CD4-positive, alpha-beta memory T cell (primary cell): ENCODE measurements at regions of chr2 and their contacts with region 1.

Region 1: DNA sequence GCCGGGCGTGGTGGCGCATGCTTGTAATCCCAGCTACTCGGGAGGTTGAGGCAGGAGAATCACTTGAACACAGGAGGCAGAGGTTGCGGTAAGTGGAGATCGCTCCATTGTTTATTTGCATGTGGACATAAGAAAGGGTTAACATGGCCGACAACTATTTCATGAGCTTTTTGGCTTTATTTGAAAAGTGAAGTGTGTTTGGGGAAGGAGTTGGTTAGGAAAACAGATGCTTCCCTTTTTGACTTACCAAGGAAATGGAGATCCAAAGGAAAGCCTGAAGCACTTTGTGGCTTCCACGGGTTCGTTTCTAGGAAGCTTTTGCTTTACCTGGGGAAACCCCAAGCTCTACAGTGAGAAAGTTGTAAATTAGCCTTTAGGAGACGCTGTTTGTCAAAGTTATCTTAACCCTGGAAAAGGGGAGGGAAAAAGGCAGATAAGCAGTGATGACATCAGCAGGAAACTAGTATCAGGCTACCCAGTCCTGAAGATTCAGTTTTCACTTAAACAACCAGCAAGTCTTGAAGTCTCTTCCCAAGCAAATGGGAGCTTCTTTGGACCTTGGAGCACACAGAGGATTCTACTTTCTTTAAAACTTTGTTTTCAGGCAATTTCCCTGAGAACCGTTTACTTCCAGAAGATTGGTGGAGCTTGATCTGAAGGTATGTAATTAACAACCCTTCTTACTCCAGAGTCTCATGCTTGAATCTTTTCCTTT is at the start of gene CASP10:
- DNase-seq: peak; percentile 62 to 81 (median 76)
- H3K4me3 ChIP-seq: peak within 1 kb of the TSS; percentile 54 to 87
- H3K4me3 Mint-ChIP-seq: peak within 1 kb of the TSS; percentile 90 to 99 (median 96)
- H3K27ac ChIP-seq: peak within 1 kb of the TSS; percentile 75
- H3K27ac Mint-ChIP-seq: peak within 1 kb of the TSS; percentile 92 to 98 (median 96)
- H3K4me1 ChIP-seq: peaks cover 37% of the 10 kb centered on the region
- H3K4me1 Mint-ChIP-seq: peaks cover 28 to 54% (median 40%) of the 10 kb centered on the region in 4 donors
- H3K27me3 ChIP-seq: no peaks in the 10 kb centered on the region
- H3K27me3 Mint-ChIP-seq: no peaks in the 10 kb centered on the region
- total RNA-seq, gene CASP10: 30.6 to 36.6 TPM

Region 2: DNA sequence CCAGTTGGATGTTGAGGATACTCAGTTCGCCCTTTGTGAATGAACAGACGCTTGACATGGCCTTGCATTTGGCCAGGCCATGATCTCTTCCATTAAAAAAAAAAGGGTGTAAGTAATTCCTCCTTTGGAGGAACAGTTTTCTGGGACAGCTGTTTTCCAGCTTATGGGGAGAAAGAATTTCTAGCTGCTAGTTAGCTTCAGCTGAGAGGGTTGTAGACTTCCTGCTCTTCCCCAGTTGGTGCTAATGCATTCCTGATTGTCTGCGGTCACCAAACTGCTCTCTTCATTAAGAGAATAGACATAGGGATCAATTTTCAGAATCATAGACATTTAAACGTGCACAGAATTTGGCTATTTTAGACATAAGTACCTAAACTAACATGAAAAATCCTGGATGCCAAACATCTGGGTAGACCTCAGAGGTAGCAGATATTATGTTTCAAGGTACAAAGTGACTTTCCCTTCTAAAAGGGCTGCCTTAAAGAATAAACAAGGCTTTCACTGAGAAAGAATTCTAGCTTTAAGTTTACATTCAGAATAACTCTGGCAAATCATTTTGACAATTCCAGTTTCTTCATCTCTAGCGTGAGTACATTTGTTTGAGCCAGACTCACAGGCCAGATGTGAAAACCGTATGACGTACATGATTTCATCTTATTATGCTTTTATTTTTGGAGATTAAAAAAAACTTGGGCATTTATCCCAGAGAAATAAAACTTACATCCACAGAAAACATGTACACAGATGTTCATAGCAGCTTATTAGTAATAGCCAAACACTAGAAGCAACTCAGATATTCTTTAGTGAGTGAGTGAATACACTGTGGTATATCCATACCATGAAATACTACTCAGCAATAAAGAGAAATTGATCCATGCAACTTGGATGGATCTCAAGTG is 1156.2 kb before region 1 on chr2:
- CTCF ChIA-PET with region 1: no interaction called
- POLR2A ChIA-PET with region 1: no interaction called
- intact Hi-C with region 1: no loop called
- DNase-seq: no peak
- H3K4me3 ChIP-seq: no peak overlapping the region
- H3K4me3 Mint-ChIP-seq: no peak overlapping the region
- H3K27ac ChIP-seq: no peak overlapping the region
- H3K27ac Mint-ChIP-seq: no peak overlapping the region
- H3K4me1 ChIP-seq: no peaks in the 10 kb centered on the region
- H3K4me1 Mint-ChIP-seq: no peaks in the 10 kb centered on the region
- H3K27me3 ChIP-seq: peaks cover 3% of the 10 kb centered on the region
- H3K27me3 Mint-ChIP-seq: peaks cover 6 to 14% of the 10 kb centered on the region in 2 donors

Region 3: DNA sequence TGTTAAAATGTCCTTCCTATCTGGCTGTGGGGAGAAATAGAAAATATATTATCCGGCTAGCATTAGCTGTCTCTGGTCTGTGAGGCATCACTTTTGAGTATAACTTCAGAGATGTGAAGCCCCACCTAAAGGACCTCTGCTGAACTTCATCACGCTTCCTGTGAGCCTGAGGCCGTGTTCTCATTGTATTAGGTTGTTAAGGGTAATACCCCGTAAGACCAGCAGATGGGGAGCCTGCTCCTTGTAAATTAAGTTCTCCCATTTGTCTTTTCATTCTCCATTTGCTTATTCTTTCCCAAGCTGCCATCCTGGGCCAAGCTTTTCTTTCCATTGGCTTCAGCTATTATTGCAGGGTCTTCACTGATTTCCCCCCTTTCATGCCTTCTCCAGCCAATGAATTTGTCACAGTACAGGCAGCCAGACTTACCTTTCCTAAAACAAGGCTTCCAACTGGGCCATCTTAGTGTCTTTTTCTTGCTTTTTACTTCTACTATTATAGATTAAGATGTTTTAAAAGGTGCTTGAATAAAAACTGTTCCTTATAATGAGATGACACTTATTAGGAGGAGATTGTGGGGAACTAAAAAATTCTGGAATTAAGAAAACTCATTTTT is 281.2 kb before region 1 on chr2:
- CTCF ChIA-PET with region 1: interaction called, 27 read pairs
- POLR2A ChIA-PET with region 1: interaction called, 8 read pairs
- intact Hi-C with region 1: no loop called
- DNase-seq: peak; percentile 76 to 83 (median 79)
- H3K4me3 ChIP-seq: no peak overlapping the region
- H3K4me3 Mint-ChIP-seq: no peak overlapping the region
- H3K27ac ChIP-seq: peak overlapping the region; percentile 1
- H3K27ac Mint-ChIP-seq: peak overlapping the region; percentile 10 to 81 (median 65)
- H3K4me1 ChIP-seq: no peaks in the 10 kb centered on the region
- H3K4me1 Mint-ChIP-seq: peaks cover 6 to 7% (median 6%) of the 10 kb centered on the region in 4 donors
- H3K27me3 ChIP-seq: no peaks in the 10 kb centered on the region
- H3K27me3 Mint-ChIP-seq: no peaks in the 10 kb centered on the region

Region 4: DNA sequence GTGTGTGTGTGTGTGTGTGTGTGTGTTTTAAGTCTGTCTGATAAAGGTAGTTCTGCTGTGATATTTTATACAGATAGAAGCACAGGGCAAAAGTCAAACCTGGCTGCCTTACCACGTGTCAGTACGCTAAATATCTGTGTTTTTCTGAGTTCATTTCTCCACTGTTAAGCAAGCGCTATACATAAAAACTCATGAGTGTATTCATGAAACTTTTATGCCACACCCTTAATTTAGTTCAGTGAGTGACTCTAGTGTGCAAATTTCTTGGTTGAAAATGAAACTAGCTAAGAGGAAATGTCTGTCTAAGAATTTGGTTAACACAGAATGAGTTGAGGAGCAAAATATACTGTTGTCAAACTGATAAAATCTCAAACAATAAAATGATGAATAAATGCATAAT is 11.3 kb after region 1 on chr2:
- CTCF ChIA-PET with region 1: interaction called, 27 read pairs
- POLR2A ChIA-PET with region 1: interaction called, 48 read pairs
- intact Hi-C with region 1: no loop called
- DNase-seq: peak in 3 of 5 donors; percentile 29 to 36 (median 32)
- H3K4me3 ChIP-seq: no peak overlapping the region
- H3K4me3 Mint-ChIP-seq: peak overlapping the region; percentile 54 to 93 (median 80)
- H3K27ac ChIP-seq: peak overlapping the region; percentile 41
- H3K27ac Mint-ChIP-seq: peak overlapping the region; percentile 62 to 95 (median 91)
- H3K4me1 ChIP-seq: peaks cover 77% of the 10 kb centered on the region
- H3K4me1 Mint-ChIP-seq: peaks cover 46 to 79% (median 62%) of the 10 kb centered on the region in 4 donors
- H3K27me3 ChIP-seq: no peaks in the 10 kb centered on the region
- H3K27me3 Mint-ChIP-seq: no peaks in the 10 kb centered on the region

Region 5: DNA sequence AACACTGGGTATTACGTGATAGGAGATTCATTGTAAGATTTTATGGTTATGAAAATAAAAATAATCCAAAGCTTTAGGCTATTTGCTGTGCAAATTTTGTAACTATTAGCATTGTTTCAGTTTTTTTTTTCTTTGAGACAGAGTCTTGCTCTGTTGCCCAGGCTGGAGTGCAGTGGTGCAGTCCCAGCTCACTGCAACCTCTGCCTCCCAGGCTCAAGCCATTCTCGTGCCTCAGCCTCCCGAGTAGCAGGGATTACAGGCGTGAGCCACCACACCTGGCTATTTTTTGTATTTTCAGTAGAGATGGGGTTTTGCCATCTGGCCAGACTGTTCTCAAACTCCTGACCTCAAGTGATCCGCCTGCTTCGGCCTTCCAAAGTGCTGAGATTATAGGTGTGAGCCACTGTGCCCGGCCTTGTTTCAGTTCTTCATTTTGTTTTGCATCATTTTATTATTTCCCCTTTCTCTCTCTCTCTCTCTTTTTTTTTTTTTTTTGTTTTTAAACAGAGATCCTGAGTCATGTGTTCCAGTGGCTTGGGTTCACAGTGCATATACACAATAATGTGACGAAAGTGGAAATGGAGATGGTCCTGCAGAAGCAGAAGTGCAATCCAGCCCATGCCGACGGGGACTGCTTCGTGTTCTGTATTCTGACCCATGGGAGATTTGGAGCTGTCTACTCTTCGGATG is 25.9 kb after region 1 on chr2:
- CTCF ChIA-PET with region 1: interaction called, 14 read pairs
- POLR2A ChIA-PET with region 1: interaction called, 11 read pairs
- intact Hi-C with region 1: loop called (anchors 1 kb)
- DNase-seq: no peak
- H3K4me3 ChIP-seq: no peak overlapping the region
- H3K4me3 Mint-ChIP-seq: no peak overlapping the region
- H3K27ac ChIP-seq: no peak overlapping the region
- H3K27ac Mint-ChIP-seq: peak overlapping the region in 2 of 7 donors; percentile 1 to 68
- H3K4me1 ChIP-seq: peaks cover 24% of the 10 kb centered on the region
- H3K4me1 Mint-ChIP-seq: peaks cover 22 to 31% (median 27%) of the 10 kb centered on the region in 4 donors
- H3K27me3 ChIP-seq: no peaks in the 10 kb centered on the region
- H3K27me3 Mint-ChIP-seq: no peaks in the 10 kb centered on the region

Region 6: DNA sequence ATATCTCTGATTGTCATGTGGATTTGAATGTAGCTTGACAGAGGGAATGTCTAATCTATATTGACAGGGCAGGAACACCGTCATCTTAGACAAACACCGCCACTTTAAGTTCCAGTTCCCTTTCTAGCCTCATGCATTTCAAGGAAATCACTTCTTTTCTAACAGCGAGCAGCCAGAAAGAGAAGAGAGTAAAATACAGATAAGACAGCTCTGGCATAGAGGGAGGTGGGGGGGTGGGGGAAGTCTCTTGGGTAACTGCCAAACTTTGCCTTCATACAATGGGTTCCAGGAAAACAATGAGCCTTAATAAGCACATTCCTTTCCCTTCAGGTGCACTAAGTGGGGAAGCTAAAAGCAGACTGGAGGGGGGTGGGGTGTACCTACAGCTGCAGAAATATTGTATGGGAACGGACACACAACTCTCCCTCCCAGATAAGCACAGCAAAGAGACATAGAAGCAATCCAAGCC is 37.3 kb after region 1 on chr2:
- CTCF ChIA-PET with region 1: interaction called, 16 read pairs
- POLR2A ChIA-PET with region 1: interaction called, 3 read pairs
- intact Hi-C with region 1: no loop called
- DNase-seq: no peak
- H3K4me3 ChIP-seq: no peak overlapping the region
- H3K4me3 Mint-ChIP-seq: peak overlapping the region in 2 of 8 donors; percentile 22 to 29
- H3K27ac ChIP-seq: no peak overlapping the region
- H3K27ac Mint-ChIP-seq: peak overlapping the region; percentile 68 to 90 (median 82)
- H3K4me1 ChIP-seq: peaks cover 24% of the 10 kb centered on the region
- H3K4me1 Mint-ChIP-seq: peaks cover 23 to 63% (median 39%) of the 10 kb centered on the region in 4 donors
- H3K27me3 ChIP-seq: no peaks in the 10 kb centered on the region
- H3K27me3 Mint-ChIP-seq: no peaks in the 10 kb centered on the region

Region 7: GRCh38 chr2:201363857-201364560 is 181.2 kb after region 1 on chr2:
- CTCF ChIA-PET with region 1: interaction called, 16 read pairs
- POLR2A ChIA-PET with region 1: interaction called, 3 read pairs
- intact Hi-C with region 1: loop called (anchors 1 kb)
- DNase-seq: peak in 4 of 5 donors; percentile 49 to 59 (median 58)
- H3K4me3 ChIP-seq: no peak overlapping the region
- H3K4me3 Mint-ChIP-seq: peak overlapping the region in 3 of 8 donors; percentile 24 to 51 (median 32)
- H3K27ac ChIP-seq: no peak overlapping the region
- H3K27ac Mint-ChIP-seq: peak overlapping the region in 4 of 7 donors; percentile 38 to 84 (median 70)
- H3K4me1 ChIP-seq: peaks cover 31% of the 10 kb centered on the region
- H3K4me1 Mint-ChIP-seq: peaks cover 20 to 33% (median 27%) of the 10 kb centered on the region in 4 donors
- H3K27me3 ChIP-seq: no peaks in the 10 kb centered on the region
- H3K27me3 Mint-ChIP-seq: no peaks in the 10 kb centered on the region

Region 8: GRCh38 chr2:201483342-201483741 is 300.5 kb after region 1 on chr2:
- CTCF ChIA-PET with region 1: no interaction called
- POLR2A ChIA-PET with region 1: no interaction called
- intact Hi-C with region 1: no loop called
- DNase-seq: no peak
- H3K4me3 ChIP-seq: no peak overlapping the region
- H3K4me3 Mint-ChIP-seq: no peak overlapping the region
- H3K27ac ChIP-seq: no peak overlapping the region
- H3K27ac Mint-ChIP-seq: no peak overlapping the region
- H3K4me1 ChIP-seq: no peaks in the 10 kb centered on the region
- H3K4me1 Mint-ChIP-seq: no peaks in the 10 kb centered on the region
- H3K27me3 ChIP-seq: no peaks in the 10 kb centered on the region
- H3K27me3 Mint-ChIP-seq: peaks cover 0 to 2% of the 10 kb centered on the region in 2 donors

Region 9: DNA sequence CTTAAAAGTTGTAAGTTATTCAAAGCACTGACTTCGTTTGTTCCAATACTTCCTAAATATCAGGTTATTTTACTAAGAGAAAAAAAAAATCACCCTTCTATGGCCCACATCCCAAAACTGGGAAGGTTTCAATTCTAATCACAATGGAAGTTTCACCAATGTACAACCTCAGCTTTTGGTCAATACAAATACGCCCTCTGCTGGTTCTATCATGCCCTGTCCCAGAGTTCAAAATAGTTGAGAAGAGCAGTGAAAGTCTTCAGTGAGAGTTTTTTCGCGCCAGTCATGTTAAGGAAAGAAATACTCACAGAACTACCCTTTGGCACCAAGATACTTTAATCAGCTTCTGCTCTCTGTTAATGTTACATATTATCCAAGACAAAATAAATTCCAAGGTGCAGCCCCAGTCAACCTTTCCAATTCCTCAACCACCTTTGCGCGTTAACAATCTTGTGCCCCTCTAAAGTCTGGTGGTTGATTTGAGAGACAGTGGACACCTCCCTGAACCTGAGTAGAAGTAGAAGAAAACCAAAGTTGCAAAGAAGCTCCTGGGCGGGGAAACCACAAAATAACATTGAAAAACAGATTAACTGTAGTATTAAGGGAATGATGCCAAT is 995.6 kb after region 1 on chr2:
- CTCF ChIA-PET with region 1: interaction called, 7 read pairs
- POLR2A ChIA-PET with region 1: no interaction called
- intact Hi-C with region 1: loop called (anchors 2 kb)
- DNase-seq: peak; percentile 43 to 57 (median 55)
- H3K4me3 ChIP-seq: no peak overlapping the region
- H3K4me3 Mint-ChIP-seq: no peak overlapping the region
- H3K27ac ChIP-seq: no peak overlapping the region
- H3K27ac Mint-ChIP-seq: no peak overlapping the region
- H3K4me1 ChIP-seq: no peaks in the 10 kb centered on the region
- H3K4me1 Mint-ChIP-seq: peaks cover 0 to 4% (median under 1%) of the 10 kb centered on the region in 4 donors
- H3K27me3 ChIP-seq: no peaks in the 10 kb centered on the region
- H3K27me3 Mint-ChIP-seq: peaks cover 5 to 8% of the 10 kb centered on the region in 2 donors